ENCODE measurements at regions of chr9 and their contacts with region 1.

Region 1: GRCh38 chr9:123326662-123327093 is 29.3 kb upstream of the CRB2 start:
- DNase-seq: no peak
- H3K4me3 ChIP-seq: no peak overlapping the region
- H3K27ac ChIP-seq: no peak overlapping the region; the same call in 1 of the 2 replicates
- H3K4me1 ChIP-seq: peaks cover 31% of the 10 kb centered on the region
- H3K27me3 ChIP-seq: no peaks in the 10 kb centered on the region
- CTCF ChIP-seq: no peak

Region 2: GRCh38 chr9:123131258-123131657 is 195.4 kb before region 1 on chr9:
- CTCF ChIA-PET with region 1: no interaction called
- POLR2A ChIA-PET with region 1: no interaction called
- intact Hi-C with region 1: no loop called
- DNase-seq: no peak
- H3K4me3 ChIP-seq: no peak overlapping the region
- H3K27ac ChIP-seq: no peak overlapping the region
- H3K4me1 ChIP-seq: no peaks in the 10 kb centered on the region
- H3K27me3 ChIP-seq: no peaks in the 10 kb centered on the region
- CTCF ChIP-seq: no peak

Region 3: GRCh38 chr9:123257276-123257675 is 69.4 kb before region 1 on chr9:
- CTCF ChIA-PET with region 1: no interaction called
- POLR2A ChIA-PET with region 1: no interaction called
- intact Hi-C with region 1: no loop called
- DNase-seq: no peak
- H3K4me3 ChIP-seq: no peak overlapping the region
- H3K27ac ChIP-seq: no peak overlapping the region
- H3K4me1 ChIP-seq: peaks cover 6% of the 10 kb centered on the region
- H3K27me3 ChIP-seq: no peaks in the 10 kb centered on the region
- CTCF ChIP-seq: no peak

Region 4: DNA sequence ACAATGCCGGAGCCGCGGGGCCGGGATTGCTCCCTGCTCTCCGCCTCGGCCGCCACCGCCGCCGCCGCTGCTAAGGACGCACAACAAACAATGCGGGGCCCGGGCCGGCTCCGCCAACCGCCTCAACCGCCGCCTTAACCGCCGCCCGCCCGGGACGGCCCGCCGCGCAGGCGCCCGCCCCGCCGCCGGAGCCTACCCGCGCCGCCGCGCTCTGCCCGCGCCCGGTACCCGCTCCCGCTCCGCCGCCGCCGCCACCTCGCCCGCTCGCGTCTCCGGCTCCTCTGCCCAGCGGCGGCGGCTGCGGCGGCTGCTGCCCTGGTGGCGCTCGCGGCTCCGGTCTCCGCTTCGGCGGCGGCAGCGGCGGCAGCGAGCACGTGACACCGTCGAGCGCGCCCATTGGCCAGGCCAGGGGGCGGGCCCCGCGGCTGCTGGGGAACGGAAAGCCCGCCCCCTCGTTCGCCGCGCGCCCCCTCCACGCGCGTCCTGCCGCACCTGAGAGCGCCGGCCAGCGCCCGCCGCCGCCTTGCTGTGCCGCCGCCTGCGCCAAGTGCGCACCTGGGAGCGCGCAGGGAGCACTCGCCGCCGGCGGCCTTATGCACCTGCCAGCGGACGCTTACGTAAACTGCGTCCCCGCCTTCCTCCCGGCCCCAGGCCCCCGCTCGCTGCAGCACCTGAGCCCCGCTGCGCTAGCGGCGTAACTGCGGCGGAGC is 58.3 kb before region 1 on chr9 and contains the start of gene STRBP:
- CTCF ChIA-PET with region 1: interaction called, 3 read pairs
- POLR2A ChIA-PET with region 1: interaction called, 3 read pairs
- intact Hi-C with region 1: loop called (anchors 1 kb)
- DNase-seq: peak; percentile 76 to 97
- H3K4me3 ChIP-seq: peak within 1 kb of the TSS; percentile 77
- H3K27ac ChIP-seq: no peak within 1 kb of the TSS
- H3K4me1 ChIP-seq: peaks cover 12% of the 10 kb centered on the region; the same call in 1 of the 2 replicates
- H3K27me3 ChIP-seq: no peaks in the 10 kb centered on the region
- CTCF ChIP-seq: no peak
- total RNA-seq, gene STRBP: 34.5 and 39.9 TPM in 2 replicates

Measured in PC-9 (cell line).